Endothelial cell of umbilical vein (primary cell): ENCODE measurements at regions of chr2 and their contacts with region 1.

Region 1: DNA sequence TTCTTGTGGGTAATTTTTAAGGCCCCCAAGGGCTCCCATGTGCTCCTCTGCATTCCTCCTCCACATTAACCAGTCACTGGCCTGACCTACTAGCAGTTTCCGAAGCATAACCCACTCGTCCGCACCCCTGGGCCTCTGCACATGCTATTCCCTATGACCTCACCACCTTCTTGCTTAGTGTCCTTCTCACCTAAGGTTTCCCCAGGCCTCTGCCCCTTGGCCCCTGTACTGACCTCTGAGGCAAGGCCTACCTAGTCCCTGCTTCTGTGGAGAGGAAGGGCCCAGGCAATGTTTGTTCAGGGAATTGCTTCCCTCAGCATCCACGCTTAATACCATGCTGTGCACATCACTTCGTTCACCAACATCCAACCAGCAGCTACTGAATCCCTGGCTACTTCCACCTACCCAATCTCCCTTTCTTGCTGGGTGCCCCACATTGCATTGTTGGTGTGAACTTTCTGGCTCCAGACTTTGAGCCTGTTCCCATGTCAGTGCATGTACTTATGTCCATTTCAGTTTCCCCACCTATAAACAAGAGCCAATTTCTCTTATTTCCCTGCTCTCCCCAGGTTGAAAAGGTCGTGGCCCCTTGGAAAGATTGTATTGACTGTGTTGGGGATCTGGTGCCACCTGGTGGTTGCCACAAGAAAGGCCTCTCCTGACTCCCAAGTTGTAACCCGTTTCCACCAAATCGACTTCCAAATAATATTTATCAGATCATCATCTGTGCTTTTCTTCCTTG is 19.2 kb upstream of the TMEM177 start:
- DNase-seq: peak; percentile 52
- H3K4me3 ChIP-seq: no peak overlapping the region
- H3K27ac ChIP-seq: no peak overlapping the region
- H3K4me1 ChIP-seq: peaks cover 15% of the 10 kb centered on the region
- H3K27me3 ChIP-seq: peaks cover 4% of the 10 kb centered on the region in 2 experiments
- CTCF ChIP-seq: peak; percentile 83 to 87
- POLR2A ChIP-seq: no peak

Region 2: DNA sequence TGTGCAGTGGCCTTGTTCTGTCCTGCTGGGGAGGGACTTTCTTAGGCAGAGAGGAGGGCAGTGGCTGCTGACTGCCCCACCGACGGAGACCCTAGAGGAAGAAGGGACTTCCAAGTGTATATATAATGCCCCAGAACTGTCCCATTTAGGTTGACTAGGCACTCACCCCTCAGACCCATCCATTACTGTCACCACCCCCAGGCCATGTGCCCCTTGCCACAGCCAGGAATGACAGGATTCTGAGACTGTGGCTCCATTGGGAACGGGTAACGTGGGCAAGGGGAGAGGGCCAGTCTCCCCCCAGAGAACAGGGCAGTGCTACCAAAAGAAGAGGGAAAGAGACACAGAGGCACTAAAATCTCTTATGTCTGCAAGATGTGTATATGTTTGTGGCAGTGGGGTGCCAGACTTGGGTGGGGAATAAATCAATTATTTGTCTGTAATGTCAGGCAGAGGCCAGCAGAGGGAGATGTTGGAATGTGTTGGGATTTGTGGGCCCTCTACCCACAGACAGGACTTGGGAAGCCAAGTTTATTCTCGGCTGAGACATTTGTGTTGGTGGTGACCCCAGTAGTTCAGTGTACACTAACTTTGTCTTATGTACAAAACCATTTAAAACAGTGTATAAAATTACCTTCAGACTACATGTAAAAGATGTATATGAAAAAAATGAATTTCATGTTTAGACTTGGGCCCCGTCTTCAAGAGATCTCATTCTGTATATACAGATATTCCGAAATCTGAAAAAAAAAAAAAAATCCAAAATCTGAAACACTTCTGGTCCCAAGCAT is 252.1 kb before region 1 on chr2:
- CTCF ChIA-PET with region 1: no interaction called
- POLR2A ChIA-PET with region 1: no interaction called
- dilution Hi-C with region 1: no loop called
- intact Hi-C with region 1: loop called (anchors 5 kb)
- DNase-seq: peak; percentile 67
- H3K4me3 ChIP-seq: no peak overlapping the region
- H3K27ac ChIP-seq: no peak overlapping the region
- H3K4me1 ChIP-seq: no peaks in the 10 kb centered on the region
- H3K27me3 ChIP-seq: peaks cover 2 to 3% of the 10 kb centered on the region in 2 experiments
- CTCF ChIP-seq: peak; percentile 66 to 70
- POLR2A ChIP-seq: no peak

Region 3: GRCh38 chr2:119517433-119517832 is 142.3 kb before region 1 on chr2:
- CTCF ChIA-PET with region 1: interaction called, 7 read pairs
- POLR2A ChIA-PET with region 1: no interaction called
- dilution Hi-C with region 1: no loop called
- intact Hi-C with region 1: loop called (anchors 1 kb)
- DNase-seq: peak; percentile 37
- H3K4me3 ChIP-seq: no peak overlapping the region
- H3K27ac ChIP-seq: no peak overlapping the region
- H3K4me1 ChIP-seq: no peaks in the 10 kb centered on the region
- H3K27me3 ChIP-seq: peaks cover 2 to 6% of the 10 kb centered on the region in 2 experiments
- CTCF ChIP-seq: peak; percentile 64 to 82
- POLR2A ChIP-seq: no peak

Region 4: GRCh38 chr2:119795309-119796303 is 135.8 kb after region 1 on chr2:
- CTCF ChIA-PET with region 1: no interaction called
- POLR2A ChIA-PET with region 1: no interaction called
- dilution Hi-C with region 1: no loop called
- intact Hi-C with region 1: no loop called
- DNase-seq: no peak
- H3K4me3 ChIP-seq: no peak overlapping the region
- H3K27ac ChIP-seq: no peak overlapping the region
- H3K4me1 ChIP-seq: no peaks in the 10 kb centered on the region
- H3K27me3 ChIP-seq: no peaks in the 10 kb centered on the region
- CTCF ChIP-seq: no peak
- POLR2A ChIP-seq: no peak